ENCODE measurements at regions of chr7 and their contacts with region 1.

Region 1: DNA sequence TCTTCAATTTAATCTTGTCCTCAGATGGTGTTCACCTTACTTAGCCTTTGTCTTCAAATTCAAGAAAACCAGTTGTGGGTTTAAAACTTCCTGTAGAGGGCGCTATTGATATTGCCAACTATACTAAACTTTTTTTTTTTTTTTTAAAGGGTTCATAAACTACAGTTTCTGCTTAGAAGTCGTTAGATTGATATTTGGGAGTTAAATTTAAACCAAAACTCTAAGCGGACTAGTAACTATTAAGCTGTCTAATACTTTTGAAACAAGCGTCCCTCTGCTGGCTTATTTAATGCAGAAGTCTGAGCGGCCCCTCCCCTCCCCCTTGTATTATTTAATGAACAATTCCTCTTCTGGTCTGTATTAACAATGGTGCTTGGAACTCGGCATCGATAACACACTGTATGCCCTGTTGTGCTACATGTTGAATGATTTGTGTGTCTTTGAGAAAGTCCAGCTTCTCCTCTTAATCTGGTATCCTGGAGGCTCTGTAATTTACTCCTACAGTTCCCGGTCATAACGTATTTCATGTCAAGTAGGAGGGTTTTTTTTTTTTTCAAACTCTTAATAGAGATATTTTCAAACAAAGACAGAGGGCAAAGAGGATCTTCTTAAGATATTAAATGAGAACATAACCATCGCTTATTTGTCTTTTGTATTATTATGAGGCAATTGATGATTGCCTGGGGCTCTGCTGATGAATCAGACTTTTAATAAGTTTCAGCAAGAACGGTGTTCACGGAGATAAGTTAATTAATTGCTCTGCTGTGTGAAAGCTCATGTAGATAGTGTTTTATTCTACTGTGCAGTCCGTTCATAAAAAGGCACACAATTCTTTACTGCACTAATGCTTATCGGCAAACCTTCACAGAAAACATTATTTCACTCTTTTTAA is 22.6 kb upstream of the CREB5 start:
- DNase-seq: no peak
- H3K4me3 Mint-ChIP-seq: no peak overlapping the region
- H3K27ac Mint-ChIP-seq: no peak overlapping the region
- H3K4me1 Mint-ChIP-seq: peaks cover 2% of the 10 kb centered on the region
- H3K27me3 Mint-ChIP-seq: peaks cover 31% of the 10 kb centered on the region

Region 2: DNA sequence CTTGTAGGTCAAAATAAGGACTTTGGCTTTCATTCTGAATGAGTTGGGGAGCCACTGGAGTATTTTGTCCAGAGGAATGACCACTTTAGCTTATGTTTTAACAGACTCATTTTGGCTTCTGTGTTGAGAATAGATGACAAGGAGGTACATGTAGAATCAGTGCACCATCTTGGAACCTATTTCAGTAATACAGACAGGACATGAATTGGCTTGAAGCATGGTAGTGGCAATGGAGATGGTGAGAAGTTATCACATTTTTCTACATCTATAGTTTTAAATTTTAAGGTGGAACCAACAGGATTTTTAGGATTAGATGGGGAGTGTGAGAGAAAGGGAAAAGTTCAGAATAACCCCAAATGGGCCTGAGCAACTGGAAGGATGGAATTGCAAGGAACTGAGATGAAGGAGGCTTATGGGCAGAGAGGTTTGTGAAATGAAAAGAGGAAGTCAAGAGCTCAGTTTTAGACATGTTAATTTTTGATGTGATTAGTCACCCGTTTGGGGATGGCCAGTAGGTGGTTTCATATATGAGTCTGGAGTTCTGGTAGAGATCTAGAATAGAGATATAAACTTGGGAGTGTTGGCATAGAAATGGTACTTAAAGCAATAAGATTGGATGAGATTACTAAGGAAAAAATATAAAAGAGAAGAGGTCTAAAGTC is 119.9 kb before region 1 on chr7:
- CTCF ChIA-PET with region 1: no interaction called
- intact Hi-C with region 1: no loop called
- DNase-seq: no peak
- H3K4me3 Mint-ChIP-seq: no peak overlapping the region
- H3K27ac Mint-ChIP-seq: no peak overlapping the region
- H3K4me1 Mint-ChIP-seq: peaks cover 9% of the 10 kb centered on the region
- H3K27me3 Mint-ChIP-seq: peaks cover 44% of the 10 kb centered on the region

Region 3: GRCh38 chr7:28626624-28627262 is 237.0 kb after region 1 on chr7:
- CTCF ChIA-PET with region 1: interaction called, 5 read pairs
- intact Hi-C with region 1: loop called (anchors 1 kb)
- DNase-seq: peak; percentile 39
- H3K4me3 Mint-ChIP-seq: no peak overlapping the region
- H3K27ac Mint-ChIP-seq: no peak overlapping the region
- H3K4me1 Mint-ChIP-seq: no peaks in the 10 kb centered on the region
- H3K27me3 Mint-ChIP-seq: peaks cover 18% of the 10 kb centered on the region

Region 4: DNA sequence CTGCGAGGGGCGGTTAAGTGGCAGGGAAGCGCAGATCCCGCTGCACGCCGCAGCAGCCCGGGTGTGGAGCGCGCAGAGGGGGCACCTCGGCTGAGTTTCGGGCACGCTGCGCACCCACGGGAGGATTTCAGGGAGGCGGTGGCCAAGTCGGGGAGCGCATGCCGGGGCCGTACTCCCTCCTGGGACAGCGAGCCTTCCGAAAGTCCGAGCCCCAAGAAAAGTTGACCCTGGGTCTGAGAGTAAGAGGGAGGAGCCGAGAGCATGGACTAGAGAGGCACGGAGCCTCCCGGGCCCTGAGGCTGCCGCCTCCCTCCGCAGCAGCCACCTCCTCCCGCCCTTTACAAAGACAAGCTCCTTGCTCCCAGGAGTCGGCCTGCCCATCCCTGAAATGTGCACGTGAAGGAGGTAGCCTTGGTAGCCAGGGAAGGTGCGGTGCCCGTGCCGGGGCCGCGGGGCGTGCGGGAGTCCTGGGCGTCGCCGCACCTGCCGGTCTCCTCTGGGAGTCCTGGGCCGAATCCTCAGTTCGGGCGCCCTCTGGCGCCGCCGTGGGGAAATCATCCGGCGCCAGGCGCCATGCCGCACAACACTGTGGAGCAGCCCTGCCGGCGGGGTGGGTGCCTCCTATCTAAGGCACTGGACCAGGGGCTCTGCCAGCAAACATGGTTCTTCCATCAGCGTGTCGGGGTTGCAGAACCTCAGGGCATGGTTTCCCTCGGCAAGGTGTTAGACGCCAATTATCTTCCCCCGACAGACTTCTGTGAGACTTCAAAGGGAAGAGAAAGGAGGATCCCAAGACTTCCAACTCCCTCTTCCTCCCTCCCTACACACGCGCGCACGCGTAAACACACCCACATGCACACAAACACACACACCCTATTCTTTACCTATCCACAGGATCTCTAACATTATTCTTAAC is 464.3 kb after region 1 on chr7:
- CTCF ChIA-PET with region 1: interaction called, 5 read pairs
- intact Hi-C with region 1: loop called (anchors 1 kb)
- DNase-seq: peak; percentile 76
- H3K4me3 Mint-ChIP-seq: peak overlapping the region; percentile 45
- H3K27ac Mint-ChIP-seq: no peak overlapping the region
- H3K4me1 Mint-ChIP-seq: peaks cover 11% of the 10 kb centered on the region
- H3K27me3 Mint-ChIP-seq: peaks cover 47% of the 10 kb centered on the region

Measured in activated naive CD4-positive, alpha-beta T cell treated with anti-CD3 and anti-CD28 coated beads for 36 hours (primary cell).